H1 (cell line): ENCODE measurements at regions of chr1 and their contacts with region 1.

Region 1: GRCh38 chr1:5830771-5831599 is 161.2 kb downstream of the NPHP4 start:
- DNase-seq: peak; percentile 73 to 93
- H3K4me3 ChIP-seq: no peak overlapping the region
- H3K27ac ChIP-seq: no peak overlapping the region
- H3K4me1 ChIP-seq: peaks cover 10 to 20% (median 15%) of the 10 kb centered on the region in 4 experiments; a peak in 6 of 7 replicates
- H3K27me3 ChIP-seq: peaks cover 0 to 7% (median 0%) of the 10 kb centered on the region in 4 experiments; a peak in 2 of 7 replicates
- CTCF ChIP-seq: peak; percentile 96 to 99 (median 98)
- EP300 ChIP-seq: 0 out of 3 replicates have a peak, but pooled peaks of 1 of the 2 experiments have one; percentile 21
- POLR2A ChIP-seq: no peak
- RAD21 ChIP-seq: peak; percentile 100

Region 2: DNA sequence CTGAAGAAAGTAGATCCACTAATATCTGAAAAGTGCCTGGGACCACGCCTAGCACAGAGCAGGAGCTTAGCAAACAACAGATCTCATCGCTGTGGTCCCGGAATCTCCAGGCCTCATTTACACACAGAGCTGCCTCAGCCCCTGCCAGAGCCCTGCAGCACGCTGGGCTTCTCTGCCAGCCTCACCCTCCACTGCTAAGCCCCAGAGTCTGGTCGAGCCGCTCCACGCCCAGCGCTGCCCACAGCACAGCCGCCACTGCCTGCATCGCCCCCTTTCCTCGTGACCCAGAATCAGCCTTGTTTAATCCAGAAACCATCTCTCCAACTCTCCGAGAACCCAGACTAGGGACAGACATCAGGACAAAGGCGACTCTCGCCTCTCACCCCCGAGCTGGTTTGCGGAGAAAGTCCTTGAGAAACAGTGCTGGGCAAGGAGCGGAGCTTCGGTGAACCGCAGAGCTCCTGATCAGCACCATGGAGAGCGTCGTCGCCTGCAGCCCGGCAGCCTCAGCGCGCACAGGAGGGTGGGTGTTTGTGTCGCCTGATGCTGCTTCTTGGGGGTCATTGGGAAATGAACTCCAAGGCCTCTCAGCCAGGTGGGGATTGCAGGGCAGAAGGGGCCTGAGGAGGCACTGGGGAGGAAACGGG is 16.2 kb after region 1 on chr1:
- CTCF ChIA-PET with region 1: interaction called, 29 read pairs
- POLR2A ChIA-PET with region 1: no interaction called
- DNase-seq: peak; percentile 41 to 84
- H3K4me3 ChIP-seq: no peak overlapping the region
- H3K27ac ChIP-seq: no peak overlapping the region
- H3K4me1 ChIP-seq: peaks cover 0 to 9% (median 6%) of the 10 kb centered on the region in 4 experiments; a peak in 5 of 7 replicates
- H3K27me3 ChIP-seq: no peaks in the 10 kb centered on the region; a peak in 3 of 7 replicates
- CTCF ChIP-seq: no peak
- EP300 ChIP-seq: no peak
- POLR2A ChIP-seq: no peak
- RAD21 ChIP-seq: 0 out of 4 replicates have a peak, but pooled peaks of 1 of the 2 experiments have one; percentile 11